Right ventricle myocardium inferior (tissue), 1 donor: ENCODE measurements at regions of chr19 and their contacts with region 1.

Region 1: DNA sequence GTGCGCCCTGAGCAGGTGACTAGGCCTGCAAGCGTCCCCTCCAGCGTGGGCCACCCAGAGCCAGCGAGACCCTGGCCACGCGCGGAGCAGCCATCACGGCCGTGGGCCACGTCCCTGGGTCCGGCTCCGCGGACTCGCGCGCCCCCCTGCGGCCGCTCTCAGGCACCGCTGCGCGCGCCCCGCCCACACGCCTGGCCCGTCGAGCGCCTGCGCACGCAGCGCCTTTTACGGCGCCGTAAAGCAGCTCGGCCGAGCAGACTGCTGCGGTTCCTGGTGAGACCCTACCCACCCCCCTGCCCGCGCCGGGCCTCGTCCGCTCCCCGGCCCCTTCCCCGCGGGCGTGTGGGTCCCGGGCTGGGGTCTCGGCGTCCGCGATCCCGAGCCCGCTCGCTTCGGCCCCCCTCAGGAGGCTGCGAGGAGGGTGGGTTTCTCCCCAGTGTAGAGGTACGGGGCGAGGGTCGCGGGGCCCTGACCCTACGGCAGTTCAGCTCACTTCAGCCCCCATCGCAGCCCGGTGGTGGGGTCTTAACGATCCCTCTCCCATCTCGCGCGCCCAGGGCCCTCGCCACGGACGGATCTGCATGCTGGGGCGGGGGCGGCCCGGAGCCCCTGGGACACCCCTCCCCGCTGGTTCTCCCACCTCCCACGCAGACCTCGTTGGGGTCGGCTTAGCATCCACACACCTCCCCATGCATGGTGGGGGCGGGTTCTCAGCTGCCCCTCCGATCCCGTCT is at the start of gene TRAPPC5:
- DNase-seq: peak; percentile 95
- ATAC-seq: peak; percentile 91
- total RNA-seq, gene TRAPPC5: 139 TPM

Region 2: DNA sequence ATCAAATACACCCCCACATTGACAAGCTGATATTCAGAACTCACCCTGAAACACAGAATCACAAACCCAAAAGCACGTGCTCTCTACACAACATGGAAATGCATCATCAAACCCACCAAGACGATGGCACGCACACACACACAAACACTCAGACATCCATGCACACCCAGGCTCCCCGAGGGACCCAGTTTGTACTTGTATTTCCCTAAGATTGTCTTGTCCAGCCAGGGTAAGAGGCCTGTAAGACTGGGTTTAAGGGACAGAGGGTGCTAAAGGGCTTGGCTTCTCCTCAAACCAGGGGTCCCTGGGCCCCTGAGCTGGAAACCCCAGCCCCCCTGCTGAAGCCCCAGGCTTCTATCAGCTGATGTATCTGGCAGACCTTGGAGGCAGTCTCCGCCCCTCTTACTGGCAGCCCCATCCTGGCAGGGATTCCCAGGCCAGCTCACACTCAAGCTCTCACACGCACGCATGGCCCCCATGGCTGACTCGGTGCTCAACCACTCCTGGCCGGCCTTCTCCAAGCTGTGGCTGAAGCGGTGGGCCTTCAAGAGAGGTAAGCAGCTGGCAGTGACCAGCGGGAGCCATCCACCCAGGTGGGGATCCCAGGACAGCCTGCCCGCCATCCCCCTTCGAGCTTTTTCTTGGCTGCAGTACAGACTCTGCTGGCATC is 325.5 kb before region 1 on chr19:
- intact Hi-C with region 1: loop called (anchors 2 kb)
- DNase-seq: no peak
- ATAC-seq: no peak

Region 3: DNA sequence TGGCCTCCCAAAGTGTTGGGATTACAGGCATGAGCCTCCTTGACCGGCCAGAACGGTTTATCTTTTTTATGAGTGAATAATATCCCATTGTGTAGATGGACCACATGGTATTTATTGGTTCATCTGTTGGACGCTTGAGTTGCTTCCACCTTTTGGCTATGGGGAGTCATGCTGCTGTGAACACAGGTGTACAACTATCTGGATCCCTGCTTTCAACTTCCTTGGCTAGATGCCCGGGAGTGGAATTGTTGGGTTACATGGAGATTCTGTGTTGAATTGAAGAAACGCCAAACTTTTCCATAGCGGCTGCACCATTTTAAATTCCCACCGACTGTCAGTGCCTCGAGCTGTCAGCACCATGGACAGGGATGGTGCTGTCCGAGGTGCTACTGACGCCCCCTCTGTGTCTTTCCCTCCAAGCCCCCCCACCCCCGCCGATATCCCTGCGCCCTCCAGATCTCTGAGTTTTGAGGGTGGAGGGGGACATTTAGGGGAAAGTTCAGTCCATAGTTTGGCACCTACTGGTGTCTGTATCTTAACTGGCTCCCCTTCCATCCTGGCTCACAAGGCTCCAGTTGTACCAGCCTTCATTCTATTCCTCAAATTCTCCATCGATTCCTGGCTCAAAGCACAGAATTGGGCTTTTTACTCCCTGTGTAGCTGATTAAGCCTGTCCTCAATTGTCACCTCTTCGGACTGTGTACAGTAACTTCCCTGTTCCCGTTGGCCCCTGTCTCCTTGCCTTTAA is 118.0 kb before region 1 on chr19:
- intact Hi-C with region 1: loop called (anchors 2 kb)
- DNase-seq: no peak
- ATAC-seq: no peak

Region 4: DNA sequence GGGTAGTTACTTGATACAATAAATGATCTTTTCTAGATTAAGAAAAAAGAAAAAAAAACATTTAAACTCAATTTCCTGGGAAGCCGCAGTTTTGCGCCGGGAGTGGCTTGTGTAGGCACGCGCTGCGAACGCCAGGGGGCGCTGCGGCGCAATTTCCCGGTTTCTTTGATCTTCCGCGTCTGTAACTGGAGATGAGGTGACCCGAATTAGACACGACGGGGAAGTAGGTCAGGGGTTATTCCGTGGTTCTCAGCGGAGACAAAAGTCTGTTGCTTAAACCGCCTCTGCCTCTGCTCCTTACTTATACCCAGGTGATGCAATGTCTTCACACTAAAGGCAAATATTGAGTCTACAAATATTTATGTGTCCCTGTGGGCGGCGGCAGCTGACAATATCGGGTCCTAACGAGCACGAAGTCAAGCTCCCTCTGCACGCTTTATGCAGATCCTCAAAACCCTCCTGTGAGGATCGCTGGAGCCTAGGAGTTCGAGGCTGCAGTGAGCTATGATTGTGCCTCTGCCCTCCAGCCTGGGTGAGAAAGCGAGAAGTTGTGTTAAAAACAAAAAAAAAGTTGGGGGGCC is 28.6 kb before region 1 on chr19:
- intact Hi-C with region 1: loop called (anchors 1 kb)
- DNase-seq: peak; percentile 94
- ATAC-seq: peak; percentile 77